ENCODE measurements at regions of chr10 and their contacts with region 1.

Region 1: GRCh38 chr10:77907900-77908717 is 18.4 kb downstream of the DLG5 start:
- DNase-seq: peak; percentile 36
- H3K4me3 Mint-ChIP-seq: no peak overlapping the region
- H3K27ac Mint-ChIP-seq: no peak overlapping the region
- H3K4me1 Mint-ChIP-seq: peaks cover 73% of the 10 kb centered on the region
- H3K27me3 Mint-ChIP-seq: no peaks in the 10 kb centered on the region
- CTCF ChIP-seq: peak; percentile 30

Region 2: DNA sequence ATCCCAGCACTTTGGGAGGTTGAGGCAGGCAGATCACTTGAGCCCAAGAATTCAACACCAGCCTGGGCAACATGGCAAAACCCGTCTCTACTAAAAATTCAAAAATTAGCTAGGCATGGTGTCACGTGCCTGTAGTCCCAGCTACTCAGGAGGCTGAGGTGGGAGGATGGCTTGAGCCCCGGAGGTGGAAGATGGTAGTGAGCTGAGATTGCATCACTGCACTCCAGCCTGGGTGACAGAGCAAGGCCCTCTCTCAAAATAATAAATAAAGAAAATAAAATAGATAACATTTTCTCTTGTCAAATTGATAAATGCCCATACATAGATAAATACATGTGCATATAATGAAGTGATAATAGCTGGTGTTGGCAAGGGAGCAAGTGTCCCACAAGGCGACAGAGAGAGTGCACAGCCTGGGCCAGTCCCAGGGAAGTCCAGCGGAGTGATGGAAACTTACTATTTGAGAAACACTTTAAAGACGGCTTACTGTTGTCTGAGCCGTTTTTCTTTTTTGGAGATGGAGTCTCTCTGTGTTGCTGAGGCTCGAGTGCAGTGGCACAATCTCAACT is 51.9 kb after region 1 on chr10:
- CTCF ChIA-PET with region 1: no interaction called
- intact Hi-C with region 1: loop called (anchors 5 kb)
- DNase-seq: no peak
- H3K4me3 Mint-ChIP-seq: no peak overlapping the region
- H3K27ac Mint-ChIP-seq: no peak overlapping the region
- H3K4me1 Mint-ChIP-seq: no peaks in the 10 kb centered on the region
- H3K27me3 Mint-ChIP-seq: no peaks in the 10 kb centered on the region
- CTCF ChIP-seq: no peak

Measured in Calu3 (cell line).